ENCODE measurements at regions of chr13 and their contacts with region 1.

Region 1: DNA sequence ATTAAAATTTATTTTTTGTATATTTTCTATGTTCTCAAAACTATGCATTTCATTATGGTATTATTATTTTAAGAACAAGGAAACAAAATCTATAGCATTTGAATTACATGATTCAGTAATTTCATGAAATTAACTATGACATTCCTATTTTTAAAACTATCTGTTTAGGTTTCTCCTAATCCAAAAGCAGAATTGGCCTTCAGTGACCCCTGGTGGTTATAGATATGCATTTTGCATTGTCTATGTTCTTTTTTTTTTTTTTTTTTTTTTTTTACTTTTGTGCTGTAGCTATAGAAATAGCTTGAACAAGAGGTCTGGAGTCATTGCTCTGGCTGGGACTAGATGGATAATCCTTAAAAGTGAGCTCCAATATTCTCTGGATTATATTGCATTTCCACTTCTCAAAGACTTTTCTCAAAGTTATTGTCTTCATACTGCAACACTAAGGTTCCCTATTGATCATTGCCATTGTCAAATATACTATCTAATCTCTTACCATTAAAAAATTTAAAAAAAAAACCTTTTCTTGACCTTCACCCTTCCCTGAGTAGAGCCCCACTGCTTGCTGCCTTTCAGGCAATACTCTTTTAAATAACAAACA is 15.9 kb upstream of the DNAJC3 start:
- DNase-seq: peak; percentile 50
- ATAC-seq: peak; percentile 40; the same call in 1 of the 2 replicates
- H3K4me3 ChIP-seq: no peak overlapping the region
- H3K27ac ChIP-seq: no peak overlapping the region
- H3K4me1 ChIP-seq: no peaks in the 10 kb centered on the region
- H3K27me3 ChIP-seq: peaks cover 4% of the 10 kb centered on the region; the same call in 1 of the 2 replicates
- CTCF ChIP-seq: peak; percentile 67
- POLR2A ChIP-seq: no peak
- RAD21 ChIP-seq: peak; percentile 65

Region 2: DNA sequence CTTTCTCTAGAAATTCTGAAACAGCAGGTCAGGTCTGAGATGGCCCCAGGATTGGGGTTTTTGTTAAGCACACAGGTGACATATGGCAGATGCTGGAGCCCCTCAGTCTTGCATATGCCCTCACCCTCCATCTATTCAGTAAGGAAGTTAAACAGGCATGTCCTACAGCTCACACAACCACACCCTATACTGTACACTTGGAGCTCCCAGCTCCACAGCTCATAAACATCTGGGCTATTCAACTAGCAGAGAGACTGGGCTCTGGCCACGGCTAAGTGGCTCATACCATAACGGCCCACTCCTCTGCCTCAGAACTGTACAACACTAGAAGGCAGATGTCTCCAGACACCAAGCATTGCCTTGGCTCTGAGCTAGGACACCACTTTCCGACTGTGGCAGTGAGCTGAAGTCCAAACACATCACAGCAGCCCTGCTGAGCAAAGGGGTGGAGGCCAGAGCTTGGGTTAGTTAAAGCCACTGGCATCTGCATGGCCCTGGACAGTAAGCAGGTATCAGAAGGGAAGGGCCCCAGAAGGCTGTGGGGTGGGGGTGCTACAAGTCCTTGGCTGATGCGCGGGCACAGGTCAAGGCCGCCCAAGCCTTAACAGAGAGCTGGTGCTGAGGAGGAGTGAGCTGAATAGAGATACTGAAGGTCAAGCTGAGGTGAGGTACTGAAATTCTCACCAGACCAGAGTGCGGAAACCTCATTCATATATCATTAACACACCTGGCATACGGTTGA is 438.9 kb before region 1 on chr13:
- CTCF ChIA-PET with region 1: no interaction called
- POLR2A ChIA-PET with region 1: no interaction called
- dilution Hi-C with region 1: no loop called
- in situ Hi-C with region 1: no loop called
- intact Hi-C with region 1: no loop called
- DNase-seq: no peak
- ATAC-seq: peak; percentile 48
- H3K4me3 ChIP-seq: no peak overlapping the region
- H3K27ac ChIP-seq: no peak overlapping the region
- H3K4me1 ChIP-seq: peaks cover 4% of the 10 kb centered on the region; the same call in 1 of the 2 replicates
- H3K27me3 ChIP-seq: no peaks in the 10 kb centered on the region
- CTCF ChIP-seq: no peak
- POLR2A ChIP-seq: no peak
- RAD21 ChIP-seq: no peak

Region 3: DNA sequence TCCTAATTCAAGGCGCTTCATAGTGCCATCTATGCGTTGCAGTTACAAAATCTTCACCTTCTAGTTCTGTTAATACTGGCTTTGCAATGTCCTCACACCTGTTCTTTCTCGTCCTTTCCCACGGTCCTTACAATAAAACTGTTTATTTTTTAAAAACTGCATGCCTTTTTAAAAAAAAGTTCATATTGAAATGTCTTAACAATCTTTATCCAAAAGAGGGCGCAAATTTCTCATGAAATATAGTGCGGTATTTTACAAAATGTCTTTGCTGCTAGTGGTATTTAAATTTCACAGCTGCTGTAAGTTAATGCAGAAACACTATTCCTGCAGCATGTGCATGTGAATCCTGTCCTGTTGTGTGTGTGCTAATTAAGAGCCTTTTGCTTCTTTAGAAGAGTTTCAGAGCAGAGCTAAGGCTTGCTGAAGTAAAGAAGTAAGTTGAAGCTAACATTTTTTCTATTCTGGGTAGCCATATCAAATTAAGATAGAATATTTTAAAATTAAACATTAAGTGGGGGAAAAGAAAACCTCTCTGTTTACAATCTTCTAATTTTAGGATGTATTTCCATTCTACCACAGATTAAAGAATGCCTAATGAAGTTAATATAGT is 124.3 kb before region 1 on chr13:
- CTCF ChIA-PET with region 1: interaction called, 6 read pairs
- POLR2A ChIA-PET with region 1: no interaction called
- dilution Hi-C with region 1: no loop called
- in situ Hi-C with region 1: no loop called
- intact Hi-C with region 1: loop called (anchors 2 kb)
- DNase-seq: peak; percentile 39
- ATAC-seq: peak; percentile 56; the same call in 1 of the 2 replicates
- H3K4me3 ChIP-seq: no peak overlapping the region
- H3K27ac ChIP-seq: no peak overlapping the region
- H3K4me1 ChIP-seq: peaks cover 2% of the 10 kb centered on the region; the same call in 1 of the 2 replicates
- H3K27me3 ChIP-seq: peaks cover 17% of the 10 kb centered on the region
- CTCF ChIP-seq: peak; percentile 53
- POLR2A ChIP-seq: no peak
- RAD21 ChIP-seq: no peak; the same call in 1 of the 2 replicates

Region 4: DNA sequence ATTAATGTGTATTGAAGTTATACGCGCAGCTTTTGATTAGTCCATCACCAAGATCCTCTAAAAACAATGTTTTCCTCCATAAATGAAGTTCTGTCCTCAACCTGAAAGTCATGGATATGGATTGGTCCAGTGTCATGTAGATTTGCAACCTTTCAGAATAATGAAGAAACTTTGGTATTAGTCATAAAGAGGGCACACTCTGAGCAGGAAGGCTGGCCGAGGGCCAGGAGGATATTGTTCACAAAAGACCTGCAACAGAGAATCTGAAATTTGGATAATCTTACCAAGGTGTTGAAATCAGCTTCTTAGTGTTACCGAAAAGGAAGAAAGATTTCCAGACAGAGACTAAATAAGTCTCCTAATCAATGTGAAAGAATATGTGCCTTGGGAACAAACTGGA is 87.9 kb before region 1 on chr13:
- CTCF ChIA-PET with region 1: no interaction called
- POLR2A ChIA-PET with region 1: no interaction called
- dilution Hi-C with region 1: no loop called
- in situ Hi-C with region 1: no loop called
- intact Hi-C with region 1: no loop called
- DNase-seq: peak; percentile 11
- ATAC-seq: no peak
- H3K4me3 ChIP-seq: no peak overlapping the region
- H3K27ac ChIP-seq: no peak overlapping the region
- H3K4me1 ChIP-seq: no peaks in the 10 kb centered on the region
- H3K27me3 ChIP-seq: 0 out of 2 replicates have a peak, but pooled peaks cover 2% of the 10 kb centered on the region
- CTCF ChIP-seq: no peak
- POLR2A ChIP-seq: no peak
- RAD21 ChIP-seq: no peak

Region 5: GRCh38 chr13:95624020-95624419 is 37.1 kb before region 1 on chr13:
- CTCF ChIA-PET with region 1: interaction called, 3 read pairs
- POLR2A ChIA-PET with region 1: no interaction called
- dilution Hi-C with region 1: no loop called
- in situ Hi-C with region 1: no loop called
- intact Hi-C with region 1: loop called (anchors 1 kb)
- DNase-seq: peak; percentile 64
- ATAC-seq: peak; percentile 48; the same call in 1 of the 2 replicates
- H3K4me3 ChIP-seq: no peak overlapping the region
- H3K27ac ChIP-seq: no peak overlapping the region
- H3K4me1 ChIP-seq: peaks cover under 1% of the 10 kb centered on the region; the same call in 1 of the 2 replicates
- H3K27me3 ChIP-seq: no peaks in the 10 kb centered on the region
- CTCF ChIP-seq: peak; percentile 70
- POLR2A ChIP-seq: no peak
- RAD21 ChIP-seq: peak; percentile 83

Region 6: DNA sequence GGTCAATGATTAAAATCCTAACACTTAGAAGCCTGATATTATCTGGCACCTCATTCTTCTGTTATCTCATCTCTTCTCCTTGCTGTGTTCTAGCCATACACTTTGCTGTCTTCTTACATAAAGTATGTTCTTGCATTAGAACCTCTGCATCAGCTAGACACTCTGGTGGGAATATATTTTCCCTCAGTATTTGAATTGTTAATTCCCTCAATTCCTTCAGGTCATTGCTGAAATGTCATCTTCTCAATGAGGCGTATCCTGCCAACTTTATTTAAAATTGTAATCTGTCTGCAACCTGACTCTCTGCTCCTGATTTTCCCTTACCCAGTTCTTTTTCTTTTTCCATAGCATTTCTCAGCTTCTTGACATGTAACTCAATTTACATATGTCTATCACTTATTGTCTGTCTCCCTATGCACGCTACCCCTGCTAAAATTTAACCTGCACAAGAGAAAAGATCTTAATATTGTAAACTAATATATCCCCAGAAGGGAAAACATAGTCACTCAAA is 254.0 kb after region 1 on chr13:
- CTCF ChIA-PET with region 1: no interaction called
- POLR2A ChIA-PET with region 1: no interaction called
- dilution Hi-C with region 1: no loop called
- in situ Hi-C with region 1: no loop called
- intact Hi-C with region 1: no loop called
- DNase-seq: no peak
- ATAC-seq: no peak
- H3K4me3 ChIP-seq: no peak overlapping the region
- H3K27ac ChIP-seq: no peak overlapping the region
- H3K4me1 ChIP-seq: no peaks in the 10 kb centered on the region
- H3K27me3 ChIP-seq: no peaks in the 10 kb centered on the region
- CTCF ChIP-seq: no peak
- POLR2A ChIP-seq: no peak
- RAD21 ChIP-seq: no peak

Measured in IMR-90 (cell line).